Astrocyte of the cerebellum (primary cell): ENCODE measurements at regions of chr7 and their contacts with region 1.

Region 1: DNA sequence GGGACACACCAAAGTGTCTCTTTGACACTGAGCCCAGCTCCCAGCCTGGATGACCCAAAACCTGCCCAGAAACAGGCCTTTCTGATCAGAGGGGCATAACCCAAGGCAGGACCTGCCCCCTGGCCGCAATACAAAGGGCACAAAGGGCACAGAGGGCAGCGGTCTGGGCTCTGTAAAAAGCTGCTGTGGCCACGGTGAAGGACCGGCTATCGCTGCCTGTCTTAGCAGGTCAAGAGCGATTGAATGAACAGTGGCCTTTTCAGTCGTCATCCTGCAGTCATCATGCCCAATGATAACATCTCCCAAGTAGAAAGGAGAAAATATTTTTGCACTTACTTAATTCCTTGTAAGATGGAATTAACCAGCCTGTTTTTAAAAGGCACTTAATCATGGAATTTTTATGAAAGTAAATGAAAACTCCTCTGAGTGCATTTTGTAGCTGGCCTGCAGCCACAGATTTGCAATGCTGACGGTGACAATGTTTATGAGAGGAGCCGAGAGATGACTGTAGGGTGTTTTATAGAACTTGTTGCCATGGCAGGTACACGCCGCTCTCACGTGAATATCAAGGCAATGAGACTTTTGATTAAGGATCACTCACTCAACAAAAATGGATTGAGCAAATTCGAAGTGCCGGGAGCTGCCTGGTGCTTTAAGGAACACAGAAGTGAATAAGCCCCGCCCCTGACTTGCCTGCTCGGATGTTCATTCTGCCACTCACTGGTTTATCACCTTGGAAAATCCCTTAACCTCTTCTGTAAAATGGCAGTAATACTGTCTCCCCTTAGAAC is 47.3 kb upstream of the BHLHA15 start:
- DNase-seq: no peak
- H3K4me3 ChIP-seq: no peak overlapping the region
- CTCF ChIP-seq: no peak

Region 2: DNA sequence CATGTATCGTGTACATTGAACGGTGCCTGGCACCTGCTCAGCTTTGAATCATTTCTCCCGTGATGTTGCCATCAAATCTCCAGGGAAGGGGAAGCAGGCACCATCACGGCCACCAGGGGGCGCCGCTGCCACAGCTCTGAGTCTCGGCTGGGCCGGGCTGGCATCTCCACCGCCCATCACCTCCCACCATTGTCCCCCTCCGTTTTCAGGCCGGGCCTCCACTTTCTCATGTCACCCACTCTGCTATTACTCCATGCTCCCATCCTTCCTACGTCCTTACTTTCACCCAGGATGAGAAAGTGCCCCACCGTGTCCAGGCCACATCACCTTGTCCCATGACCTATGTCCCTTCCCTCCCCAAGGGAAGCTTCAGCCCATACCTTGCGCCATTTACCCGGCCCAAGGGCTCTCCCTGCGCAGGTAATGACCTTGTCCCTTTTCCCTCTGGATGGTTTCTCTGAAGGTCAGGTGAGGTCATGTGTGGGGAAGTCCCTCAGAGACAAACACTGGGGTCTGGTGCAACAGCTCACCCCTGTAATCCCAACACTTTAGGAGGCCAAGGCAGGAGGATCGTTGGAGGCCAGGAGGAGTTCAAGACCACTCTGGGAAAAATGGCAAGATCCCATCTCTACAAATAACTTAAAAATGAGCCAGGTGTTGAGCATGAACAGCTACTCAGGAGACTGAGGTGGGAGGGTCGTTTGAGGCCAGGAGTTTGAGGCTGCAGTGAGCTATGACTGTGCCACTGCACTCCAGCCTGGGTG is 142.1 kb before region 1 on chr7:
- in situ Hi-C with region 1: loop called (anchors 5 kb)
- DNase-seq: peak; percentile 27
- H3K4me3 ChIP-seq: no peak overlapping the region
- CTCF ChIP-seq: peak; percentile 91

Region 3: DNA sequence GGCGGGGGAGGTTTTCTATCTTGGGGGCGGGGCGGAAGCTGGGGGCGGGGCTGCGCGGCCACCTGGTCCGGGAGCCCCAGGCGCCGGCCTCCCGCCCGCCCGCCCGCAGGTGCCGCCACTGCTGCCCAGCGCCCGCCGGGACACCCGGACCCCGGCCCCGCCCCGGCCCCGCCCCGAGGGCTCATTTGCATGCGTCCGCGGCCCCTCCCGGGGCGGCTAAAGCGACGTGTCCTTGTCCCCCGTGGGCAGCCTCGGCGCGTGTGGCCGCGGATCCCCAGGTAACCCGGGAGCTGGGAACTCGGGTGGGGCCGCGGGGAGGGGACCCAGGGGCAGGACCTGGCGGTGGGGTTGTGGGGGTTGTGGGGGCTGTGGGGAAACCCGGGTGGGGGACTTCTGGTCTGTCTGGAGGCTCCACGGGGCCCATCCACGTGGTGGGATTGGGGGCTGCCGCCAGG is 47.3 kb after region 1 on chr7 and contains the start of gene BHLHA15:
- in situ Hi-C with region 1: no loop called
- DNase-seq: no peak
- H3K4me3 ChIP-seq: peak within 1 kb of the TSS; percentile 34
- CTCF ChIP-seq: no peak

Region 4: DNA sequence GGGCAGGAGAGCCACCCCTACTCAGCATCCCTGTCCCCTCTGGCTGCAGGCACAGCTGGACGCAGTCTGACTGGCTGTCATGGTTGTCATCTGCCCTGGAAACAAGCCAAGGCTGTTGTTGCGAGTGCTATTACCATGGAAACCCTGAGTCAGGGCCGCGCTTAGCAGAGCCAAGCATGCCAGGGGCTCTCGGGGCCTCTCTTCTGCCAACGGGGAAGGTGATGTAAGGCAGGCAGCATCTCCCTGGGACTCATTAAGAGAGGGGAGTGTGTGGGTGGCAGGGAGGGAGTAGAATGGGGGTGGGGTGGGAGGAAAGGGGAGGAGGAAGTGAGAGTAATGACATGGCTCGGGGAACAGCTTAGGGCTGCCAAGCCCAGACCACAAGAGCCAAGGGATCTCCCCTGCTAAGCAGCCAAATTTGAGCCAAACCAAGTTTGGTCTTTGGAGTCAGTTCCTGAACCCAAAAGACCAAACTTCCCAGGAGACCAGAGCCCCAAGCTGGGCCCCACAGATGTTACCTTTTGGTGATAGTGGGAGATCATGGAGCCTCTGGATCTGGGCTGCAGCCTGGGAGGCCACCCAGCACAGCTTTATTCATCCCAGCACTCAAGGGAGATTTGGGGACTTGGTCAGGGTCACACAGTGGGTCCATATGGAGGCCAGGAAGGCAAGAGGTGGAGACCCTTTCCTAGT is 638.3 kb after region 1 on chr7:
- in situ Hi-C with region 1: no loop called
- DNase-seq: peak; percentile 51
- H3K4me3 ChIP-seq: no peak overlapping the region
- CTCF ChIP-seq: no peak